B cell (primary cell): ENCODE measurements at regions of chr1 and their contacts with region 1.

Region 1: DNA sequence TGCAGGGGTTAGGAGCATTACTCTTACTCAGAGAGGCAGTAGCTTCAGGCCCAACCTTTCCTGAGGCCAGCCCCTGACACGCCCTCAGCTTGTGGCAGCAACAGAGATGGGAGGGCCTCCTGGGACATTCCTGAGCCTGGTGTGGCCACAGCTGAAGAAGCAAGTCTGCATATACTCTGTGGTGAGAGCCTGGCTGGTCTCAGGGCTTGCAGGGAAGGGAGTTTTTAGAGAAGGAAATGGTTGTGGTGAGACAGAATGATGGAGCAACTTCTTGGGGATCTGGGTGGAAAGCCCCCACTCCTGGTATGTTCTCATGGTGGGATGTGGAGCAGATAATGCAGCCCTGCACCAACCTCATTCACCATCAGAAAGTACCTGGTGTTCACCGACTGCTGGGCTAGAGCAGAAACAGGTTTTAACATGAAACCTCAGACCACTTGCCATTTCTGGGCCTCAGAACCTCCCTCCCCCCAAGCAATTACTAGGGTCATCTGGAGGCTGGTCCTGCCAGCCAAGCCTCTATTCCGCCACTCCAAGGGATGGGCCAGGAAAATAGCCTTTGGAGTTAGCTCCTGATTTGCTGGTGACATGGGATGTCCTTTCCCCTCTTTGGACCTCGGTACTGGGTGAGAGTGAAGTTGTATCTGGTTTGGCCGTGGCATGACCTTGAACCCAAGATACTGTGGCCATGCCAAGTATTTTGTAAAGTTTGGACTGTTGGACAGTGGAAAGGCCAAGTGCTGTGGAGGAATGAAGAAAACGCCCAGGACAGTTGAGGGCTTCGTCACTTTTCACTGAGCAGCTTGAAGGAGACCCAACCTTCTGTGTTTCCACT is 28.1 kb upstream of the RNF19B start:
- DNase-seq: peak; percentile 87
- ATAC-seq: peak; percentile 94
- H3K4me3 ChIP-seq: peak overlapping the region in 3 of 5 experiments; percentile 10 to 48 (median 12)
- H3K4me3 Mint-ChIP-seq: peak overlapping the region; percentile 74
- H3K27ac ChIP-seq: peak overlapping the region; percentile 63 to 88
- H3K27ac Mint-ChIP-seq: peak overlapping the region; percentile 98
- H3K4me1 ChIP-seq: peaks cover 53 to 54% of the 10 kb centered on the region in 2 donors
- H3K4me1 Mint-ChIP-seq: peaks cover 63% of the 10 kb centered on the region
- H3K27me3 ChIP-seq: no peaks in the 10 kb centered on the region
- H3K27me3 Mint-ChIP-seq: no peaks in the 10 kb centered on the region
- CTCF ChIP-seq: no peak

Region 2: GRCh38 chr1:32953495-32953894 is 39.2 kb before region 1 on chr1:
- CTCF ChIA-PET with region 1: interaction called, 3 read pairs
- POLR2A ChIA-PET with region 1: interaction called, 6 read pairs
- intact Hi-C with region 1: loop called (anchors 5 kb)
- DNase-seq: no peak
- ATAC-seq: no peak
- H3K4me3 ChIP-seq: no peak overlapping the region
- H3K4me3 Mint-ChIP-seq: peak overlapping the region; percentile 3
- H3K27ac ChIP-seq: no peak overlapping the region
- H3K27ac Mint-ChIP-seq: no peak overlapping the region
- H3K4me1 ChIP-seq: peaks cover 14 to 19% of the 10 kb centered on the region in 2 donors
- H3K4me1 Mint-ChIP-seq: peaks cover 55% of the 10 kb centered on the region
- H3K27me3 ChIP-seq: no peaks in the 10 kb centered on the region
- H3K27me3 Mint-ChIP-seq: no peaks in the 10 kb centered on the region
- CTCF ChIP-seq: no peak

Region 3: GRCh38 chr1:32981003-32981901 is 11.5 kb before region 1 on chr1:
- CTCF ChIA-PET with region 1: interaction called, 11 read pairs
- POLR2A ChIA-PET with region 1: interaction called, 19 read pairs
- intact Hi-C with region 1: loop called (anchors 1 kb)
- DNase-seq: peak; percentile 88
- ATAC-seq: peak; percentile 96
- H3K4me3 ChIP-seq: peak overlapping the region in 4 of 5 experiments; percentile 6 to 44 (median 38)
- H3K4me3 Mint-ChIP-seq: peak overlapping the region; percentile 74
- H3K27ac ChIP-seq: peak overlapping the region; percentile 70 to 87
- H3K27ac Mint-ChIP-seq: peak overlapping the region; percentile 84
- H3K4me1 ChIP-seq: peaks cover 34 to 44% of the 10 kb centered on the region in 2 donors
- H3K4me1 Mint-ChIP-seq: peaks cover 43% of the 10 kb centered on the region
- H3K27me3 ChIP-seq: no peaks in the 10 kb centered on the region
- H3K27me3 Mint-ChIP-seq: no peaks in the 10 kb centered on the region
- CTCF ChIP-seq: no peak

Region 4: GRCh38 chr1:33007190-33008050 is 14.7 kb after region 1 on chr1:
- CTCF ChIA-PET with region 1: interaction called, 32 read pairs
- POLR2A ChIA-PET with region 1: interaction called, 5 read pairs
- intact Hi-C with region 1: no loop called
- DNase-seq: peak; percentile 37
- ATAC-seq: peak; percentile 56
- H3K4me3 ChIP-seq: no peak overlapping the region
- H3K4me3 Mint-ChIP-seq: no peak overlapping the region
- H3K27ac ChIP-seq: no peak overlapping the region
- H3K27ac Mint-ChIP-seq: no peak overlapping the region
- H3K4me1 ChIP-seq: no peaks in the 10 kb centered on the region
- H3K4me1 Mint-ChIP-seq: peaks cover 2% of the 10 kb centered on the region
- H3K27me3 ChIP-seq: no peaks in the 10 kb centered on the region
- H3K27me3 Mint-ChIP-seq: no peaks in the 10 kb centered on the region
- CTCF ChIP-seq: peak; percentile 16

Region 5: GRCh38 chr1:33036526-33037503 is 44.1 kb after region 1 on chr1 and contains the start of gene AK2:
- CTCF ChIA-PET with region 1: no interaction called
- POLR2A ChIA-PET with region 1: interaction called, 3 read pairs
- intact Hi-C with region 1: loop called (anchors 2 kb)
- DNase-seq: peak; percentile 94
- ATAC-seq: peak; percentile 99
- H3K4me3 ChIP-seq: peak within 1 kb of the TSS; percentile 72 to 99 (median 77)
- H3K4me3 Mint-ChIP-seq: peak within 1 kb of the TSS; percentile 97
- H3K27ac ChIP-seq: peak within 1 kb of the TSS; percentile 42 to 78
- H3K27ac Mint-ChIP-seq: peak within 1 kb of the TSS; percentile 91
- H3K4me1 ChIP-seq: peaks cover 16 to 24% of the 10 kb centered on the region in 2 donors
- H3K4me1 Mint-ChIP-seq: peaks cover 45% of the 10 kb centered on the region
- H3K27me3 ChIP-seq: no peaks in the 10 kb centered on the region
- H3K27me3 Mint-ChIP-seq: no peaks in the 10 kb centered on the region
- CTCF ChIP-seq: no peak
- total RNA-seq, gene AK2: 104 and 109 TPM in 2 replicates

Region 6: DNA sequence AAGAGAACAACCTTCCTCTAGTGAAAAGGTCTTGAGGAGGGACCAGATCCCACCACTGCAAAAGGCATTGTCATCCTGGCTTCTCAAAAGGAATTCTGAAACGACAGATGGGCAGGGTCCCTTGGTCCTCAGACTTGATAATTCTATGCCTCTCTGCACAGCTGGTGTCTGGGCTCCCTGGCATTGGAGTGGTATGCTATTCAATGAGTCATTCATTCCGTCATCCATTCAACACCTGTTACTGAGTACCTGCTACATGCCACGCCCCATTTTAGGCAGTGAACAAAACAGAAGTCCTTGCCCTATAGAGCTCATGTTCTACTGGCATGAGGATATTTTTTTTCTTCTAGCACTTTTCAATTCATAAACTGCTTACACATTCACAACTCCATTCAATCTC is 825.4 kb after region 1 on chr1:
- CTCF ChIA-PET with region 1: no interaction called
- POLR2A ChIA-PET with region 1: no interaction called
- intact Hi-C with region 1: no loop called
- DNase-seq: no peak
- ATAC-seq: no peak
- H3K4me3 ChIP-seq: no peak overlapping the region
- H3K4me3 Mint-ChIP-seq: no peak overlapping the region
- H3K27ac ChIP-seq: no peak overlapping the region
- H3K27ac Mint-ChIP-seq: no peak overlapping the region
- H3K4me1 ChIP-seq: no peaks in the 10 kb centered on the region
- H3K4me1 Mint-ChIP-seq: no peaks in the 10 kb centered on the region
- H3K27me3 ChIP-seq: peaks cover 0 to 3% (median 0%) of the 10 kb centered on the region in 4 experiments
- H3K27me3 Mint-ChIP-seq: peaks cover 24% of the 10 kb centered on the region
- CTCF ChIP-seq: no peak